Activated CD8-positive, alpha-beta T cell treated with anti-CD3 and anti-CD28 coated beads, Interleukin-2, amount 10 ng/mL, durations not matched to agents 7 days and 5 days (primary cell): ENCODE measurements at regions of chr17 and their contacts with region 1.

Region 1: DNA sequence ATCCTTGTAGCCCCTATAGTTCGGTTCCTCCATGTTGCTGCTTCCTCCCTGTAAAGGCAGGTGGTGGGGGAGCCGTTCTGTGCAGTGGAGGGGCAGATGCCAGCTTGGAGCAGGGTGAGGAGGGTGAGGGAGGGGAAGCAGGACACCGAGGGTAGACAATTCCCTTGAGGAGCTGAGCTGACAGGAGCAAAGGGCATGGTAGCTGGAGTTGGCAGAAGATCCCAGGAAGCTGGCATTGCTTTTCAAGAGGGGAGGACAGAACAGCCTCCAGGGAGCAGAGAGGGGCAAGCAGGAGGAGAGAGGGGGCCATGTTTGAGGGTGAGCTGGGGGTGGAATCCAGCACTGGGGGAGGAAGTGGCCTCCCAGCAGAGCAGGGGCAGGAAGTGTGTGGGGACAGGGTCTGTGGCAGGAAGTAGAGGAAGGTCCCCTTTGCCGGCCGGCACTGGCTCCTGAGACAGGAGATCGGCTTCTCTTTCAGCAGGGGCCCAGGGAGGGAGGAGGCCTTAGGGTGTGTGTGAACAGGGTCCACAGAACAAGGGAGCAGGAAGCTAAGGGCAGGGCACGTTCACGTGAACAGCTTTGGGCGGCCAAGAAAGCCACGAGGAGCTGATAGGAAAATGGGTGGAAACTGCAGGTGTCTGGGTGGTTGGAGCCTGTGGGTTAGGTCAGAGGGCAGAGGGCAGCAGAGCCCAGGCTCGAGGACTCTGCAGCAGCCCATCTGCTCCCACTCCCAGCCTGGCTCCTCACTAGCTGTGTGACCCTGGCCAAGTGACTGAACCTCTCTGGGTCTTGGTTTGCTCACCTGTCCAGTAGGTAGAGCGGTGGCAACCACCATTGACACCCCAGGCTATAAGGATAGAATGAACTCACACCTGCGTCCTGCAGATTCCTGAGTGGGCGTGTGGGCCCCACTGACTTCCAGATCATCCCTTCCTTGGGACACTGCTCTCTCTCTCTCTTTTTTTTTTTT is 17.5 kb upstream of the SPNS2 start:
- DNase-seq: peak; percentile 83
- ATAC-seq: peak; percentile 83
- H3K4me3 Mint-ChIP-seq: peak overlapping the region; percentile 71
- H3K27ac Mint-ChIP-seq: peak overlapping the region; percentile 99
- H3K4me1 Mint-ChIP-seq: peaks cover 62% of the 10 kb centered on the region
- H3K27me3 Mint-ChIP-seq: no peaks in the 10 kb centered on the region

Region 2: GRCh38 chr17:4287710-4288109 is 193.5 kb before region 1 on chr17:
- CTCF ChIA-PET with region 1: no interaction called
- POLR2A ChIA-PET with region 1: no interaction called
- DNase-seq: no peak
- ATAC-seq: no peak
- H3K4me3 Mint-ChIP-seq: no peak overlapping the region
- H3K27ac Mint-ChIP-seq: no peak overlapping the region
- H3K4me1 Mint-ChIP-seq: no peaks in the 10 kb centered on the region
- H3K27me3 Mint-ChIP-seq: no peaks in the 10 kb centered on the region

Region 3: GRCh38 chr17:4433515-4434031 is 47.6 kb before region 1 on chr17 and contains the start of gene SPNS3:
- CTCF ChIA-PET with region 1: interaction called, 3 read pairs
- POLR2A ChIA-PET with region 1: interaction called, 11 read pairs
- DNase-seq: peak; percentile 80
- ATAC-seq: peak; percentile 82
- H3K4me3 Mint-ChIP-seq: peak within 1 kb of the TSS; percentile 82
- H3K27ac Mint-ChIP-seq: peak within 1 kb of the TSS; percentile 93
- H3K4me1 Mint-ChIP-seq: peaks cover 47% of the 10 kb centered on the region
- H3K27me3 Mint-ChIP-seq: peaks cover 3% of the 10 kb centered on the region
- total RNA-seq, gene SPNS3: 26.8 to 29.1 TPM